HepG2 (cell line): ENCODE measurements at regions of chr7 and their contacts with region 1.

Region 1: DNA sequence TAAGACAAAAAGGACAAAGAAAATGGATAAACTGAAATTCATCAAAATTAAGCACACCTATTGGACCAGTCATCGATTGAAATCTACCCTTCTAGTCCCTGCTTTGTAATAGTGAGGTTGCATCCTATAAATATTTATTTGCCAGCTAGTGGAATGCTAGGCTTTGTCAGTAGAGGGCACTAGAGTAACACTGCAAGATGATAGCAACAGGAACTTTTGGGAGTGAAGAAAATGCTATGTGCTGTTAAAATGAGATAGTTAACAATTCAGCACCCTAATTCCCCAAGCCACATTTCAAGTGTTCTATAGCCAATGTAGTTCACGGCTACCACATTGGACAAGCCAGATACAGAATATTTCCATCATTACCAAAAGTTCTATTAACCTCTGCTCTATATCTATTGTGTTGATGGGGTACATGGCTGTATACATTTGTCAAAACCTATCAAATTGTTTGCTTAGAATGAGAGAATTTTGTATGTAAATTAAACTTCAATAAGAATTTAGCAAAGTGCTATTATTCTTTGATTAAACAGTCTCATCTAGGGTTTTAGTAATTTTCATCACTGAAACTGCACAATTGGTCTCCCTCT is 69.8 kb downstream of the LSMEM1 start:
- DNase-seq: peak; percentile 60
- ATAC-seq: peak; percentile 83
- H3K4me3 ChIP-seq: no peak overlapping the region
- H3K27ac ChIP-seq: no peak overlapping the region
- H3K4me1 ChIP-seq: no peaks in the 10 kb centered on the region
- H3K27me3 ChIP-seq: no peaks in the 10 kb centered on the region; a peak in 1 of 5 replicates
- CTCF ChIP-seq: peak; percentile 88
- EP300 ChIP-seq: no peak
- POLR2A ChIP-seq: no peak
- RAD21 ChIP-seq: peak; percentile 74

Region 2: GRCh38 chr7:112869111-112869757 is 318.7 kb after region 1 on chr7:
- CTCF ChIA-PET with region 1: interaction called, 23 read pairs
- POLR2A ChIA-PET with region 1: no interaction called
- in situ Hi-C with region 1: loop called (anchors 10 kb)
- intact Hi-C with region 1: loop called (anchors 1 kb)
- DNase-seq: peak; percentile 52
- ATAC-seq: peak; percentile 95
- H3K4me3 ChIP-seq: no peak overlapping the region
- H3K27ac ChIP-seq: no peak overlapping the region
- H3K4me1 ChIP-seq: no peaks in the 10 kb centered on the region
- H3K27me3 ChIP-seq: no peaks in the 10 kb centered on the region
- CTCF ChIP-seq: peak; percentile 90
- EP300 ChIP-seq: no peak
- POLR2A ChIP-seq: no peak
- RAD21 ChIP-seq: peak; percentile 87

Region 3: DNA sequence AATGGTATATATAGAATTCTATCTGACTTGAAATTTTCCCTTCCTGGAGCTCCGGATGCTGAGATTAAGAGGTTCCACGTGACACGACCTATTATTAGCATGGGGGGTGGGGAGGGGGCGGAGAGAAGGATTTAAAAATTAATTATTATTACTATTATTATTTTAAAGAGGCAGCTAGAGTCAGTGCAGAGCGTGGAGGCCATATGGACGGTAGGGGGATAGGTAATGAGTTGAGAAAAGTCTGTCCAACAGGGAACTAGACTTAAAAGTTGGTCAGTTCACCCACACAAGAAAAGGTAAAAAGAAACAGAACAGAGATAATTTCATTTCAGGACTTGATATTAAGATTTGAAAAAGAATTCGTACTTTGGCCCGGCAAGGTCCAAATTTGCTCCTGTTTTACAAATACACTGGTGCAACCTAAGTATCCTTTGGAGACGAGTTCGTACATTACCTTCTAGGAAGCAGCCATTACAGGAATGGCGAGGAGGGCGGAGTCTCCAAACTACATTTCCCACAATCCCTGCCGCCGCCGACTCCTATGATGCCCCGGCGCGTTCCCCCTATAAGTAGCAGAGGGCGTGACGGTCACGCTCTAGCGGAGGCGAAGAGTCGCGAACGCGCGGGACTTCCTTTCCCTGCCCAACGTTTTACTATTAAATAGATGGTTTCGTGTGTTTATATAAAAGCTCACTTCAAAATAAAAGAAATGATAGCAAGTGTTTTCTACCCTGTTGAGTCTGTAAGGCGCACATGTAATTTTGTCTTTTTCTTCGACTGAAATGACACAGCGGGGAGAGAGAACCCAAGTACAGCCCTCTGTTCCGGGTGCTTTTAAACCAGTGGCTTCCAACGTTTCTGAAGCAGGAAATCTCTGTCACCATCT is 567.8 kb after region 1 on chr7 and contains the start of gene SMIM30:
- CTCF ChIA-PET with region 1: no interaction called
- POLR2A ChIA-PET with region 1: no interaction called
- in situ Hi-C with region 1: no loop called
- intact Hi-C with region 1: loop called (anchors 10 kb)
- DNase-seq: peak; percentile 80
- ATAC-seq: peak; percentile 100
- H3K4me3 ChIP-seq: peak within 1 kb of the TSS; percentile 73 to 82 (median 75)
- H3K27ac ChIP-seq: no peak within 1 kb of the TSS
- H3K4me1 ChIP-seq: peaks cover 15% of the 10 kb centered on the region
- H3K27me3 ChIP-seq: no peaks in the 10 kb centered on the region; a peak in 1 of 5 replicates
- CTCF ChIP-seq: peak; percentile 14; the same call in 1 of the 2 replicates
- EP300 ChIP-seq: no peak
- POLR2A ChIP-seq: peak; percentile 52 to 78
- RAD21 ChIP-seq: no peak
- total RNA-seq, gene SMIM30: 23.5 and 32.1 TPM in 2 replicates

Region 4: GRCh38 chr7:113698556-113699220 is 1148.1 kb after region 1 on chr7:
- CTCF ChIA-PET with region 1: no interaction called
- POLR2A ChIA-PET with region 1: no interaction called
- in situ Hi-C with region 1: loop called (anchors 25 kb)
- intact Hi-C with region 1: loop called (anchors 1 kb)
- DNase-seq: peak; percentile 15
- ATAC-seq: peak; percentile 45; the same call in 2 of the 3 replicates
- H3K4me3 ChIP-seq: no peak overlapping the region
- H3K27ac ChIP-seq: no peak overlapping the region
- H3K4me1 ChIP-seq: no peaks in the 10 kb centered on the region
- H3K27me3 ChIP-seq: no peaks in the 10 kb centered on the region
- CTCF ChIP-seq: peak; percentile 63
- EP300 ChIP-seq: no peak
- POLR2A ChIP-seq: no peak
- RAD21 ChIP-seq: no peak